WTC11 (cell line): ENCODE measurements at regions of chr5 and their contacts with region 1.

Region 1: GRCh38 chr5:76204719-76205118 is 121.5 kb downstream of the SV2C start:
- DNase-seq: no peak
- ATAC-seq: no peak
- H3K4me3 Mint-ChIP-seq: no peak overlapping the region
- H3K27ac Mint-ChIP-seq: no peak overlapping the region
- H3K4me1 Mint-ChIP-seq: peaks cover 11% of the 10 kb centered on the region
- H3K27me3 Mint-ChIP-seq: no peaks in the 10 kb centered on the region
- CTCF ChIP-seq: no peak

Region 2: GRCh38 chr5:76074487-76075065 is 130.1 kb before region 1 on chr5:
- CTCF ChIA-PET with region 1: interaction called, 18 read pairs
- POLR2A ChIA-PET with region 1: no interaction called
- DNase-seq: peak; percentile 42
- ATAC-seq: peak; percentile 85
- H3K4me3 Mint-ChIP-seq: no peak overlapping the region
- H3K27ac Mint-ChIP-seq: no peak overlapping the region
- H3K4me1 Mint-ChIP-seq: no peaks in the 10 kb centered on the region
- H3K27me3 Mint-ChIP-seq: peaks cover 44% of the 10 kb centered on the region
- CTCF ChIP-seq: peak; percentile 63

Region 3: DNA sequence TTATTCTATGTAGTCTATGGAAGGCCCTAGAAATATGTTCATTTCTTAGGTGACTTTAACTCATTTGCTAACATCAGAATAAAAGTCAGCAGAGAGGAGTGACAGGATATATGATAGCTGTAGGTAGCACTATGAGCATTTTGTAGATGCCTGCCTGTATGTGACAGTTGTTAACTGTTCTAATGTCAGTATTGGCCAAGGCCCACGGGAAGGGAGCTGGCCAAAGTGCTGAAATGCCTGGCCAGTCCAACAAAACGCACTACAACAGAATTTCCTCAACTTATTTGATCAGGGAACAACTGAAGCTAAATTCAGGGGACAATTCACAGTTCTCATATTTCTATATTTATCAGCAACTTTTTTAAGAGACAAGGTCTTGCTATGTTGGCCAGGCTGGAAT is 100.7 kb before region 1 on chr5:
- CTCF ChIA-PET with region 1: interaction called, 13 read pairs
- POLR2A ChIA-PET with region 1: no interaction called
- DNase-seq: peak; percentile 65
- ATAC-seq: peak; percentile 79
- H3K4me3 Mint-ChIP-seq: no peak overlapping the region
- H3K27ac Mint-ChIP-seq: no peak overlapping the region
- H3K4me1 Mint-ChIP-seq: no peaks in the 10 kb centered on the region
- H3K27me3 Mint-ChIP-seq: no peaks in the 10 kb centered on the region
- CTCF ChIP-seq: no peak

Region 4: DNA sequence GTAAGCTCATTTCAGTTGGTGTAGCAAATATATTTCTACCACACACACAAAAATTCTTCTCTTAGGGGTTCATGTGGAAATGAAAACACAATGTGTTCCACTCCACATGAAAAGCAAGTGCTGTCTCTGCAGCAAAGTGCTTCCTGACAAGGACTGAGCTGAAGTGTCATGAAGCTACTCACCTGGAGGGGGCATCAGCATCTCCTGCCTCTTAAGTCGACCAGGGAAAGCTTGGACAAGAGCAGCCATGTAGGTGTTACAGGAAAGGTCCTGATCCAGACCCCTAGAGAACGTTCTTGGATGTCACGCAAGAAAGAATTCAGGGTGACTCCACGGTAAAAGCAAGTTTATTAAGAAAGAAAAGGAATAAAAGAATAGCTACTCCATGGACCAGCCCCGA is 58.8 kb before region 1 on chr5:
- CTCF ChIA-PET with region 1: interaction called, 11 read pairs
- POLR2A ChIA-PET with region 1: no interaction called
- DNase-seq: peak; percentile 50
- ATAC-seq: peak; percentile 86
- H3K4me3 Mint-ChIP-seq: no peak overlapping the region
- H3K27ac Mint-ChIP-seq: no peak overlapping the region
- H3K4me1 Mint-ChIP-seq: peaks cover 19% of the 10 kb centered on the region
- H3K27me3 Mint-ChIP-seq: peaks cover 30% of the 10 kb centered on the region
- CTCF ChIP-seq: no peak

Region 5: GRCh38 chr5:76191826-76192490 is 12.8 kb before region 1 on chr5:
- CTCF ChIA-PET with region 1: interaction called, 11 read pairs
- POLR2A ChIA-PET with region 1: no interaction called
- DNase-seq: no peak
- ATAC-seq: no peak
- H3K4me3 Mint-ChIP-seq: no peak overlapping the region
- H3K27ac Mint-ChIP-seq: no peak overlapping the region
- H3K4me1 Mint-ChIP-seq: peaks cover 29% of the 10 kb centered on the region
- H3K27me3 Mint-ChIP-seq: no peaks in the 10 kb centered on the region
- CTCF ChIP-seq: no peak

Region 6: GRCh38 chr5:76223696-76224095 is 19.0 kb after region 1 on chr5:
- CTCF ChIA-PET with region 1: interaction called, 11 read pairs
- POLR2A ChIA-PET with region 1: no interaction called
- DNase-seq: no peak
- ATAC-seq: no peak
- H3K4me3 Mint-ChIP-seq: no peak overlapping the region
- H3K27ac Mint-ChIP-seq: no peak overlapping the region
- H3K4me1 Mint-ChIP-seq: peaks cover 8% of the 10 kb centered on the region
- H3K27me3 Mint-ChIP-seq: no peaks in the 10 kb centered on the region
- CTCF ChIP-seq: no peak